Activated B cell treated with CpG ODN at 0.5 μM for 24 hours (primary cell): ENCODE measurements at regions of chr5 and their contacts with region 1.

Region 1: GRCh38 chr5:173697931-173698579 is 81.6 kb upstream of the BOD1 start:
- DNase-seq: no peak
- ATAC-seq: peak; percentile 35
- H3K4me3 Mint-ChIP-seq: peak overlapping the region; percentile 24
- H3K27ac Mint-ChIP-seq: peak overlapping the region; percentile 36
- H3K4me1 Mint-ChIP-seq: peaks cover 38% of the 10 kb centered on the region
- H3K27me3 Mint-ChIP-seq: no peaks in the 10 kb centered on the region
- CTCF ChIP-seq: no peak

Region 2: GRCh38 chr5:173679909-173680630 is 18.0 kb before region 1 on chr5:
- CTCF ChIA-PET with region 1: no interaction called
- POLR2A ChIA-PET with region 1: no interaction called
- intact Hi-C with region 1: loop called (anchors 2 kb)
- DNase-seq: no peak
- ATAC-seq: peak; percentile 54
- H3K4me3 Mint-ChIP-seq: peak overlapping the region; percentile 44
- H3K27ac Mint-ChIP-seq: peak overlapping the region; percentile 86
- H3K4me1 Mint-ChIP-seq: peaks cover 47% of the 10 kb centered on the region
- H3K27me3 Mint-ChIP-seq: no peaks in the 10 kb centered on the region
- CTCF ChIP-seq: no peak

Region 3: GRCh38 chr5:173823711-173824528 is 125.9 kb after region 1 on chr5:
- CTCF ChIA-PET with region 1: no interaction called
- POLR2A ChIA-PET with region 1: no interaction called
- intact Hi-C with region 1: loop called (anchors 5 kb)
- DNase-seq: no peak
- ATAC-seq: no peak
- H3K4me3 Mint-ChIP-seq: no peak overlapping the region
- H3K27ac Mint-ChIP-seq: peak overlapping the region; percentile 42
- H3K4me1 Mint-ChIP-seq: peaks cover 86% of the 10 kb centered on the region
- H3K27me3 Mint-ChIP-seq: no peaks in the 10 kb centered on the region
- CTCF ChIP-seq: no peak